ENCODE measurements at regions of chr3 and their contacts with region 1.

Region 1: DNA sequence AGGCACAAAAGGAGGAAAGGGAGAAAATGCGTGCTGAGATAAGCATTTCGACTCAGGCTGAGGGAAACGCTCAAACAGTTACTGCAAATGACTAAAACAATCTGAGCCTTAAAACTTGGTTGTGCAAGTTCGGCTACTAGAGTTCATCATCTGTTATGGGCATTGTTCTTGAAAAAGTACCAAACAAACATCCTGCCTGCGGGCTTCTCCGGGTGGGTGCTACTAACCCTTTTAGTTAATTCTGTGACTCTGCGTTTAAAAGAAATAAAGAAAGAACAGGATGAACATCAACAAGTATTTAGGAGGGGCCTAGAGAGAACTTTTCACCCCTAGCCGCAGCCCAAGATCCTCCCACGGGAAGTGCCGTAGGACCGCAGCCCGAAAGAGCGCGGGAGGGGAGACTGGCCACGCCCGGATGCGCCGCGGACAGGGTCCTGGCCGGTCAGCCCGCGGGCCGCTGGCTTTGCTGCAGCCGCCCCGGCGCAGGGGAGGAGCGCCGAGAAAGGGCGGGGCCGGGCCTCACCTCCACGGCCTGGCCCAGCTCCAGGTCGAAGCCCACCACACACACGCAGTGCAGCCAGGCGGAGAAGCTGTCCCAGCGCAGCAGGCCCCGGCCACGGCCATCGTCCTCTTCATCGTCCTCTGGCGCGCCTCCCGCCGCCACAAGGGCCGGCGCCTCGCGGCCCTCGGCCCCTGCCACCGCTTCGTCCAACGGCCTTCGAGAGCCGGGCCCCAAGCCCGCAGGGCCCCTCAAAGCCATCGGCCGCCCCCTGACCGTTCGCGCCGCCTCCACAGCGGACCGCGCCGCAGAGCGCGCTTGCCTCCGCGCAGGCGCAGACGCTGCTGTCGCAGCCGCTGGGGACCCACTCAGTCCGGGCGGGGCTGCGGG is at the start of gene DENND6A:
- DNase-seq: peak; percentile 97
- ATAC-seq: peak; percentile 90
- H3K4me3 Mint-ChIP-seq: peak within 1 kb of the TSS; percentile 84
- H3K27ac Mint-ChIP-seq: peak within 1 kb of the TSS; percentile 86
- H3K4me1 Mint-ChIP-seq: peaks cover 39% of the 10 kb centered on the region
- H3K27me3 Mint-ChIP-seq: peaks cover 2% of the 10 kb centered on the region
- total RNA-seq, gene DENND6A: 22.8 to 23.9 TPM

Region 2: GRCh38 chr3:57130571-57131209 is 561.8 kb before region 1 on chr3:
- CTCF ChIA-PET with region 1: no interaction called
- POLR2A ChIA-PET with region 1: no interaction called
- DNase-seq: no peak
- ATAC-seq: no peak
- H3K4me3 Mint-ChIP-seq: no peak overlapping the region
- H3K27ac Mint-ChIP-seq: no peak overlapping the region
- H3K4me1 Mint-ChIP-seq: peaks cover 8% of the 10 kb centered on the region
- H3K27me3 Mint-ChIP-seq: peaks cover 11% of the 10 kb centered on the region

Region 3: DNA sequence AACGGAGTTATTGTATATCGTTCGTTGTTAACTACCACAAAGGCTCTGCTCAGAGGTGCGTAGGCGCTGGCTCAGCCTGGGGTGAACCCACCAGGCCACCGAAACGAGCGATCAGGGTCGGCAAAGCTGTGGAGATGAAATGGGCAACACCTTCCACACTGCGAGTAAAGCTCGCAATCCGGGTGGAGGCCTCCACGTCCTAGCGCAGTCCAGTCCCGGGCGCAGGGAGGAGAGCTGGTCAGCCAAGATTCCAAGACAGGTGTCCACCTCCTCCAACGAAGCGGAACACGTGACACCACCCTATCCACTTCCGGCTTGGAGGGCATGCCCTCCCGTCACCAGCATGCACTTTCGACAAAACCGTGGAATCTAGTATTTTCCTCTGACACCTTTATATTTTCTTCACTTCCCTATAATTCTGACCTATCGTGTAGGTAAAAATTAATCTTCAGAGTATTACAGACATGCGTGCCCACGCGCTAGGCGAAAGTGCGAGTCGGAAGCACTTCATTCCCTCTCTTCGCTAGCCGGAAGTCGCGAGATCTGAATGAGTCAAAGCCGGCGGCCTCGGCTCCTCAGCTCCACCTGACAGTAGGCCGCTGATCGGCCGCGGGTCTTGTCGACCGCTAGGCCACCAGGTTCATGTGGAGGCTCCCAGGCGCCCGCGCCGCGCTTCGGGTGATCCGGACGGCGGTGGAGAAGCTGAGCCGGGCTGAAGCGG is 136.6 kb before region 1 on chr3 and contains the start of gene PDE12:
- CTCF ChIA-PET with region 1: no interaction called
- POLR2A ChIA-PET with region 1: interaction called, 13 read pairs
- DNase-seq: peak; percentile 88
- ATAC-seq: peak; percentile 82
- H3K4me3 Mint-ChIP-seq: peak within 1 kb of the TSS; percentile 98
- H3K27ac Mint-ChIP-seq: peak within 1 kb of the TSS; percentile 98
- H3K4me1 Mint-ChIP-seq: peaks cover 29% of the 10 kb centered on the region
- H3K27me3 Mint-ChIP-seq: no peaks in the 10 kb centered on the region
- total RNA-seq, gene PDE12: 27.8 to 31.2 TPM

Region 4: GRCh38 chr3:57597122-57597923 is 95.2 kb before region 1 on chr3 and contains the start of gene ARF4:
- CTCF ChIA-PET with region 1: no interaction called
- POLR2A ChIA-PET with region 1: interaction called, 12 read pairs
- DNase-seq: peak; percentile 99
- ATAC-seq: peak; percentile 90
- H3K4me3 Mint-ChIP-seq: peak within 1 kb of the TSS; percentile 93
- H3K27ac Mint-ChIP-seq: peak within 1 kb of the TSS; percentile 98
- H3K4me1 Mint-ChIP-seq: peaks cover 48% of the 10 kb centered on the region
- H3K27me3 Mint-ChIP-seq: no peaks in the 10 kb centered on the region
- total RNA-seq, gene ARF4: 51.0 to 52.9 TPM

Region 5: GRCh38 chr3:57680046-57680445 is 12.5 kb before region 1 on chr3:
- CTCF ChIA-PET with region 1: interaction called, 12 read pairs
- POLR2A ChIA-PET with region 1: interaction called, 9 read pairs
- DNase-seq: no peak
- ATAC-seq: no peak
- H3K4me3 Mint-ChIP-seq: no peak overlapping the region
- H3K27ac Mint-ChIP-seq: no peak overlapping the region
- H3K4me1 Mint-ChIP-seq: peaks cover 47% of the 10 kb centered on the region
- H3K27me3 Mint-ChIP-seq: no peaks in the 10 kb centered on the region

Region 6: DNA sequence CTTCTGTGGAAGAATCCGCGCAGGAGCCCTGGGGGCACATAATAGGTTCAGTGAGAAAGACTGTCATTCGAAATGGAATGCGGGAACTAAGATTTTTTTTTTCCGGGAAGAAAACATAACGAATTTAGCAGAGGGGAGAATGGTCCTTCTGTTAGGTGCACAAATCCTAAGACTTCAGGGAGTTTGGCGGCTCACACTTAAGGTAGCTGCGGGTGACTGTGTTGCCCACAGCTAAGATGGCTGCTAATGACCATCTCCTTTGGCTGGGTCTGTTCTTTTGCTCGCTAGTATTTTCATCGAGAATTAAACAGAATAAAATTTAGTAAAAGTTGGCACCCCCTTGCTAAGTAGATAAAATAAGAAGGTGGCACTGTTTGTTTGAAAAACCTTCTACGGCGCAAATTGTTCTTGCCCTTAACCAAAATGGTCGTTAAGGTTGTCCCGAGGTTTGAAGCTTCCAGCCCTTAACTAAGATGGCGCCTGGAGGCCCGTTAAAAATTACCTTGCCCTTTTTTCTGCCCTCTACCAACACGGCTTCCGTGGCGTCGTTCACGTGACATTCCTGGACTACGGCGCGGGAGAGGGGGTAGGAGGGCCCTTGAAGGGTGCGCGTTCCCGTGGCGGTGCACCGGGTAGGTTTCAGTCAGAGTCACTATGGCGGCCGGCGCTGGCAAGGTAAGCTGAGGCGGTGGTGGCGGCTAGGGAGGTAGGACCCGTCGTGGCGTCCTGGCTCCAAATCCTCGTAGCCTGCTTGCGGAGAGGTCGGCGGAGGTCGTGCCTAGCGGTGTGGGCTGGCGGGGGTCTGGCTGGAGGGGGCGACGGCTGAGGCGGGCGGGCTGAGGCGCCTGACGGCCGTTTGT is 63.4 kb after region 1 on chr3 and contains the start of gene SLMAP:
- CTCF ChIA-PET with region 1: interaction called, 3 read pairs
- POLR2A ChIA-PET with region 1: interaction called, 10 read pairs
- DNase-seq: peak; percentile 98
- ATAC-seq: peak; percentile 95
- H3K4me3 Mint-ChIP-seq: peak within 1 kb of the TSS; percentile 97
- H3K27ac Mint-ChIP-seq: peak within 1 kb of the TSS; percentile 94
- H3K4me1 Mint-ChIP-seq: peaks cover 42% of the 10 kb centered on the region
- H3K27me3 Mint-ChIP-seq: peaks cover 4% of the 10 kb centered on the region
- total RNA-seq, gene SLMAP: 63.0 to 65.1 TPM